HEK293 (cell line): ENCODE measurements at regions of chr5 and their contacts with region 1.

Region 1: DNA sequence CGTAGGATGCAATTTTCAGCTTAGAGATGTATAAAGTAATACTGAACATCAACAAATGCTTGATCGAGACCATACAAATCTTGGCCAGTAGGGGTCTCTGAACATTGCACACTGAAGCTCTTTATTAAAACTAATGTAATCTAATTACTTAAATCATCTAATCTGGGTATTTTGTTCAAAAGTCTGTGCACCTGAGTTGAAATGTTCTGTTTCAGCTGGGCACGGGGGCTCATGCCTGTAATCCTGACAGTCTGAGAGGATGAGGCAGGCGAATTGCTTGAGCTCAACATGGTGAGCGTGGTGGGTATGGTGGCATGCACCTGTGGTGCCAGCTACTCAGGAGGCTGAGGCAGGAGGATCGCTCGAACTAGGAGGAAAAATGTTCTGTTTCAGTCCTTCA is 41.0 kb downstream of the ESM1 start:
- H3K4me3 ChIP-seq: no peak overlapping the region
- H3K27ac ChIP-seq: no peak overlapping the region
- H3K4me1 ChIP-seq: no peaks in the 10 kb centered on the region
- CTCF ChIP-seq: no peak

Region 2: GRCh38 chr5:54905943-54906537 is 38.3 kb before region 1 on chr5:
- CTCF ChIA-PET with region 1: interaction called, 13 read pairs
- POLR2A ChIA-PET with region 1: no interaction called
- H3K4me3 ChIP-seq: no peak overlapping the region
- H3K27ac ChIP-seq: no peak overlapping the region
- H3K4me1 ChIP-seq: no peaks in the 10 kb centered on the region
- CTCF ChIP-seq: 0 out of 2 replicates have a peak, but pooled peaks have one; percentile 35

Region 3: GRCh38 chr5:54930736-54931135 is 13.6 kb before region 1 on chr5:
- CTCF ChIA-PET with region 1: interaction called, 16 read pairs
- POLR2A ChIA-PET with region 1: no interaction called
- H3K4me3 ChIP-seq: no peak overlapping the region
- H3K27ac ChIP-seq: no peak overlapping the region
- H3K4me1 ChIP-seq: no peaks in the 10 kb centered on the region
- CTCF ChIP-seq: no peak

Region 4: GRCh38 chr5:54959673-54960418 is 15.5 kb after region 1 on chr5:
- CTCF ChIA-PET with region 1: interaction called, 42 read pairs
- POLR2A ChIA-PET with region 1: no interaction called
- H3K4me3 ChIP-seq: no peak overlapping the region
- H3K27ac ChIP-seq: no peak overlapping the region
- H3K4me1 ChIP-seq: no peaks in the 10 kb centered on the region
- CTCF ChIP-seq: no peak

Region 5: GRCh38 chr5:54975701-54976100 is 31.3 kb after region 1 on chr5:
- CTCF ChIA-PET with region 1: interaction called, 12 read pairs
- POLR2A ChIA-PET with region 1: no interaction called
- H3K4me3 ChIP-seq: no peak overlapping the region
- H3K27ac ChIP-seq: no peak overlapping the region
- H3K4me1 ChIP-seq: no peaks in the 10 kb centered on the region
- CTCF ChIP-seq: no peak

Region 6: DNA sequence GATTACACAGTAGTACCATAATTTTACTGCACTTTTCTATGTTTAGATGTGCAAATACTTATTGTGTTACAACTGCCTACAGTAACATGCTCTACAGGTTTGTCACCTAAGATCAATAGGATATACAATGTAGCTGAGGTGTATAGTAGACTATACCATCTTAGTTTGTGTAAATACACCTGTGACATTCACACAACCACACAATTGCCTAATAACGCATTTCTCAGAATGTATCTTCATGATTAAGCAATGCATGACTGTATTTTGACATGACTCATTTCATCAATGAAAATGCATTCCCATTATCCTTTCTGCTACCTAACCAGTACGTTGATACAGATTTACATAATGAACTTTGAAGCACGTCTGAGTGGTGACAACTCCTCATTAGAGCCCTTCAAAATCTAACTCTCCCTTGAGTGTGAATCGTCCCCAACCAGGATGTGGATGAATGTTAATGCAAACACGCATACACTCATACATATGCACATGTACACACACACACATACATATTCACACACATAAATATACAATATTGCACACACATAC is 108.1 kb after region 1 on chr5:
- CTCF ChIA-PET with region 1: no interaction called
- POLR2A ChIA-PET with region 1: no interaction called
- H3K4me3 ChIP-seq: no peak overlapping the region
- H3K27ac ChIP-seq: no peak overlapping the region
- H3K4me1 ChIP-seq: no peaks in the 10 kb centered on the region
- CTCF ChIP-seq: no peak

Region 7: GRCh38 chr5:55146543-55147151 is 202.3 kb after region 1 on chr5:
- CTCF ChIA-PET with region 1: interaction called, 33 read pairs
- POLR2A ChIA-PET with region 1: no interaction called
- H3K4me3 ChIP-seq: no peak overlapping the region
- H3K27ac ChIP-seq: no peak overlapping the region
- H3K4me1 ChIP-seq: no peaks in the 10 kb centered on the region
- CTCF ChIP-seq: peak; percentile 84

Region 8: GRCh38 chr5:55159763-55160492 is 215.6 kb after region 1 on chr5 and contains the start of gene GPX8:
- CTCF ChIA-PET with region 1: interaction called, 13 read pairs
- POLR2A ChIA-PET with region 1: no interaction called
- H3K4me3 ChIP-seq: peak within 1 kb of the TSS; percentile 54
- H3K27ac ChIP-seq: peak within 1 kb of the TSS; percentile 2; the same call in 1 of the 2 replicates
- H3K4me1 ChIP-seq: no peaks in the 10 kb centered on the region
- CTCF ChIP-seq: peak; percentile 62; the same call in 1 of the 2 replicates